ENCODE measurements at regions of chr21 and their contacts with region 1.

Region 1: DNA sequence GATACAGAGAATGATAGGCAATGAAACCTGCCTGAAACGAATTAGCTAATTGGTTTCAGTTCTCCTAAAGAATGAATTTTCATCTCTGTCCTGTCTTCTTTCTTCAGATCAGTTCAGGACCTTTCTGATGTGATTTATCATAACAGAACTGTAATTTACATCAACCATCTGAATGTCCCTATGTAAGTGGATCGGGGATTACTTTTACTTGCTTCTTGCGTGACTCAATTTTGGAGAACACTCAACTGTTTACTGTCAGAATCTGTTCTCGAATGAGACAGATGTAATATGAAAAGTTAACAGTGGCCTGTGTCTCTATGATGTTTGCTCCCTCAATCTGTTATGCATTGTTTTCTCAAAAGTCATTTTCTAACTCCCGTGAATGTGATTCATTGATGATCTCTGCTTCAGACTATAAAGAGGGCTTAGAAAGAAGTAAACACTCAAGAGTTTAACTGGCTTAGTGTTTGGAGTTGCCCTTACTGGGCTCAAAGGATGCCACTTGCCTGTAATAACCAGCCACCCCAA is 111.0 kb downstream of the GABPA start:
- DNase-seq: no peak
- H3K4me3 Mint-ChIP-seq: no peak overlapping the region
- H3K27ac Mint-ChIP-seq: peak overlapping the region; percentile 60
- H3K4me1 Mint-ChIP-seq: peaks cover 14% of the 10 kb centered on the region
- H3K27me3 Mint-ChIP-seq: peaks cover 22% of the 10 kb centered on the region

Region 2: GRCh38 chr21:25809013-25809412 is 36.8 kb before region 1 on chr21:
- CTCF ChIA-PET with region 1: no interaction called
- POLR2A ChIA-PET with region 1: no interaction called
- intact Hi-C with region 1: loop called (anchors 1 kb)
- DNase-seq: peak; percentile 24
- H3K4me3 Mint-ChIP-seq: no peak overlapping the region
- H3K27ac Mint-ChIP-seq: no peak overlapping the region
- H3K4me1 Mint-ChIP-seq: peaks cover 12% of the 10 kb centered on the region
- H3K27me3 Mint-ChIP-seq: peaks cover 4% of the 10 kb centered on the region